Psoas muscle (tissue), 8 donors: ENCODE measurements at regions of chr6 and their contacts with region 1.

Region 1: DNA sequence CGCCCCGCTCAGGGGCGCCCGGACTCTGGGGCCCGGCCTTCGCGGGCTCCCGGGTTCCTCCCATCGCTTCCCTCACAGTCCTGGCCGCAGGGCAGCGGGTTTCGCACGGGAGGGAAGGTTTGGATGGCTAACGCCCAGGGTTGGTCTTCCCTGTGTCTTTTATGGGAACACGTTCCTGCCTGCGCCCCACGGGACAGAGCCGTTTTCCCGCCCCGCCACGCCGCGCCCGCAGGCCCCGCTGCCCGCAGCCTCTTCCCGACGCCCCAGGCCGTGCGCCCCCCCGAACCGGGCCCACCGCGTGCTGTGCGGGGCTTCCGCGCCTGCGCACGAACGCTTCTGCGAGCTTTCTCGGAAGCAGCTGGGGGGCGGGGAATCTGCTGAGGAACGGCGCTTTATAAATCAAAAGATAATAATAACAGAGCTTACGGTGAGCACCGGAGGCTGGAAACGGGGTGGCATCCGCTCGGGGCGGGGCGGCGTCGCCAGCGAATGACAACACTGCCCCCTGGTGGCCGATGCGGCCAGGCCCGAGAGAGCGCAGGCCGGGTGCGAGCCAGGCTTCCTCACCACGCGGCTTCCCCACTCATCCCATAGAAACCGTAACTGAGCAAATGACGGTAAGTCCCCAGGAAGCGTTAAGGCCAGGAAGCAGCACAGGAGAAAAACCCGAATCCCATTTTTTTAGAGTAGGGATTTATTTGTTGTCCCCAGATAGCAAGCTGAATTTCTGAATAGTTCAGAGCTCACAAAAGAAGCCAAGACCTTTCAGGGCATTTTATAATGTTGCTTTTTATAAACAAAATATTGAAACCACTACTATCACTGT is 116.4 kb downstream of the MYLK4 start:
- DNase-seq: peak; percentile 86 to 90
- ATAC-seq: peak; percentile 86 to 92 (median 88)
- H3K4me3 ChIP-seq: peak overlapping the region; percentile 65
- H3K27ac ChIP-seq: peak overlapping the region; percentile 75
- H3K4me1 ChIP-seq: peaks cover 30% of the 10 kb centered on the region
- H3K27me3 ChIP-seq: no peaks in the 10 kb centered on the region
- CTCF ChIP-seq: peak; percentile 99

Region 2: DNA sequence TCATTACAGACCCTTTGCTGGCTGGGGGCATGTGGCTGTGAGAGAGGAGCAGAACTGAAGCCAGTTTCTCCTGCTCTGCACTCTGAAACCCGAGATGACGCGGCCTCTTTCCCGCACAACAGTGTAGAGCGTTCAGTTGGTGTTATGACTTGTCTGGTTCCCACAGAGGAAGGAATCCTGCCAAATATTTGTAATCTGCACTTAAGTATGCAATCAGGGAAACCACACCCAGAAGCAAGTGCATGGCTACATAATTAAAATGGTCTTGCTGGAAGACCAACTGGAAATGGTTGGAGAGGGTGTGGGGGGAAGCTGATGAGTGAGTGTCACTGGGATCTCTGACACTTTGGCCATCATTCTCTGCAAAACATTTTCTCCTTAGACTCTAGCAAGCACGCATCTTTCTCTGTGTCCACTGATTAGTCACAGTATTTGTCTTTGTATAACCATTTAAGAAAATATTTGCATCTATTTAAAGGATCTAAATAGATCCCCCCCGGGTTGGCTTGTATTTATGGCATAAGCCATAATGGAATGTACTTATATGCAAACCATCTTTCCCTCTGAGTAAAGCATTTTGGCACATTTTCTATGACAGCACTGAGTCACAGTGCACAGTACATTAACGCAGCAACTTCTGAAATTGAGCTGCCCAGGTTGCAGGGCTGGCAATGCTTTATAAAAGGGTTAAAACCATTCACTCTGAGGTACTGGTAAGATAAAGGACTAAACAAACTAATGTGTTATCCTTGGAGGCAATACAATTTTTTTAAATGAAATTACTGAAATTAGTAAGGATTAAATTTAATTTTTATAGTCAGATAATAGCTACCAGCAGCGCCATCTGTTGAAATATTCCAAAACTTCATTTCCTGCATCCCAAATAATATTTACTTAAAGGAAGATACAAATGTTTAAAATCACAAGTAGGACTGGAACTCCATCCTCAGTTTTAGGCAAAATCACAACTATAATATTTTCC is 947.9 kb before region 1 on chr6:
- intact Hi-C with region 1: loop called in 1 of 2 experiments (anchors 10 kb)
- DNase-seq: peak in 1 of 2 donors; percentile 23
- ATAC-seq: peak; percentile 66 to 90 (median 79)
- H3K4me3 ChIP-seq: no peak overlapping the region
- H3K27ac ChIP-seq: peak overlapping the region; percentile 47
- H3K4me1 ChIP-seq: peaks cover 9% of the 10 kb centered on the region
- H3K27me3 ChIP-seq: no peaks in the 10 kb centered on the region
- CTCF ChIP-seq: peak; percentile 24

Region 3: DNA sequence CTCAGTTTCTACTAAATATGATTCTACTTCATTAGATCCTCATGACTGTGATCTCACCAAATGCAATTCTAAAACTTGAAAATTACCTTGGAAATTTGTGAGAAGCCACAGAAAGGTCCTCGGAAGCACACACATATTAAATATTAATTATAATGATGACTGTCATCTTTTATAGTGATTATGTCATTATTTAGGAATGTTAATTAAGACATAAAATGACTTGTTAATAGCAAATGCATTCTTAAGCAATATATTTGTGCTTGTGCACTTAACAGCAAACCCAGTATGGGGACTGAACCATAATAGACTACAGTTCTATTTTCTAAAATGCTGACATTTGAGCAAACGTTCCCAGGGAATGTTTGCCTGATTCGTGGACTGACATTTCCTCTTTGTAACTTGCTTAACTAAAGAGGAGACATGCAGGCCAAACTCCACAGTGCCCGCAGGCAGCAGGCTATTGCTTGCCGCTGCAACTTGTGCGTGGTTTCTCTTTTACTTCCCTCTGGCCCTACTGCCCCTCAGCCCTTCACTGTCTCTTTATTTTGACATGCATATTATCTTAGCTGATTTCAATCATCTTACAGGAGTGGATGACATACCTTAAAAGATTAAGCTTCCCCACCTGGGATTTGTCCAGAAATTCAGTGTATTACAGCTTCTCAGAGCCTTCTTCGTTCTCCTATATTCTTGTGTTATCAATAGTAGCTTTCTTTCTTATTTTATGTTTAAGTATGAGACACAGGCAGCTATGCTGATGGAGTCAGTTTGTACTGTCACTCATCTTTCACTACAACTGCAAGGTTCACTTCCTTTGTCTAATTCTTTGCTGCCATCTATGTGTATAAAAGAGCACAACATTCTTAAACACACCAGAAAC is 530.5 kb before region 1 on chr6:
- intact Hi-C with region 1: loop called in 1 of 2 experiments (anchors 10 kb)
- DNase-seq: no peak
- ATAC-seq: peak in 1 of 4 donors; percentile 65
- H3K4me3 ChIP-seq: peak overlapping the region; percentile 31
- H3K27ac ChIP-seq: no peak overlapping the region
- H3K4me1 ChIP-seq: peaks cover 7% of the 10 kb centered on the region
- H3K27me3 ChIP-seq: no peaks in the 10 kb centered on the region
- CTCF ChIP-seq: peak; percentile 55

Region 4: GRCh38 chr6:2196079-2196679 is 438.2 kb before region 1 on chr6:
- intact Hi-C with region 1: loop called in 1 of 2 experiments (anchors 10 kb)
- DNase-seq: no peak
- ATAC-seq: peak; percentile 56 to 88 (median 64)
- H3K4me3 ChIP-seq: no peak overlapping the region
- H3K27ac ChIP-seq: no peak overlapping the region
- H3K4me1 ChIP-seq: no peaks in the 10 kb centered on the region
- H3K27me3 ChIP-seq: peaks cover 0 to 3% (median 0%) of the 10 kb centered on the region in 3 donors
- CTCF ChIP-seq: peak; percentile 85

Region 5: DNA sequence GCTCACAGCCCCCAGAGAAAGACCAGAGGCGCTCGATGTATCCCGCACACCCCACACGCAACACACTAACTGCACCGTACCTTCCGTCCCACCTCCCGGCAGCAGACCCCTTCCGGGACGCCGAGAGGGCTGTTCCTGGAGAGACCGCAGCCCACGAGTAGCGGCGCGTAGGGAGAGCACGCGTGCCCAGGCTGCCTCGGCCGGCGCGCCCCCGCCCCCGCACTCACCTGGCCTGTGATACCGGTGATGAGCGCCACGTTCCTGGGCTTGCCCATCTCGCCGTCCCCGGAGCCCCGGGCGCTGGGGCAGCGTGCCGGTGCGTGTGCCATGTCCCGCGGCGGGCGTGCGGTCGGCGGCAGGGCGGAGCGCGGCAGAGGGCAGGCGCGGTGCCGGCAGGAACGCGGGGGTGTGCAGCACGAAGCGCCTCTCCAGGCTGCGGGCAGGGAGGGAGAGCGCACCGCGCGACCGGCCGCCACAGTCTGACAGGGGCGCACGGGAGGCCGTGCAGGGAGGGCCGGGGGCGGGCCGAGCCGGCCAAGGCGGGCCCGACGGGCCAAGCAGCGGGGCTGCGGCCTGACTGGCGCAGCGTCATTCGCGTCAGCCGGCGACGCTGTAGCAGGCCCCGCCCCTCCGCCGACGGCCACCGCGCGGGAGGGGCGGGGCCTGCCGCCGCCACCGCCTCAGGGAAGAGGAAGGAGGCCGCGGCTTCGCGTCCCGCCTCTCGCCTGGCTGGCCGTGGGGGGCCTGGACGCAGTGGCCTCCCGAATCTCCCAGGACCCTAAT is 389.1 kb before region 1 on chr6 and contains the start of gene GMDS:
- intact Hi-C with region 1: loop called (anchors 5 to 10 kb)
- DNase-seq: peak; percentile 88 to 93
- ATAC-seq: peak; percentile 99
- H3K4me3 ChIP-seq: peak within 1 kb of the TSS; percentile 97
- H3K27ac ChIP-seq: peak within 1 kb of the TSS; percentile 90
- H3K4me1 ChIP-seq: peaks cover 8% of the 10 kb centered on the region
- H3K27me3 ChIP-seq: no peaks in the 10 kb centered on the region
- CTCF ChIP-seq: no peak
- total RNA-seq, gene GMDS: 3.9 to 6.6 (median 4.7) TPM

Region 6: DNA sequence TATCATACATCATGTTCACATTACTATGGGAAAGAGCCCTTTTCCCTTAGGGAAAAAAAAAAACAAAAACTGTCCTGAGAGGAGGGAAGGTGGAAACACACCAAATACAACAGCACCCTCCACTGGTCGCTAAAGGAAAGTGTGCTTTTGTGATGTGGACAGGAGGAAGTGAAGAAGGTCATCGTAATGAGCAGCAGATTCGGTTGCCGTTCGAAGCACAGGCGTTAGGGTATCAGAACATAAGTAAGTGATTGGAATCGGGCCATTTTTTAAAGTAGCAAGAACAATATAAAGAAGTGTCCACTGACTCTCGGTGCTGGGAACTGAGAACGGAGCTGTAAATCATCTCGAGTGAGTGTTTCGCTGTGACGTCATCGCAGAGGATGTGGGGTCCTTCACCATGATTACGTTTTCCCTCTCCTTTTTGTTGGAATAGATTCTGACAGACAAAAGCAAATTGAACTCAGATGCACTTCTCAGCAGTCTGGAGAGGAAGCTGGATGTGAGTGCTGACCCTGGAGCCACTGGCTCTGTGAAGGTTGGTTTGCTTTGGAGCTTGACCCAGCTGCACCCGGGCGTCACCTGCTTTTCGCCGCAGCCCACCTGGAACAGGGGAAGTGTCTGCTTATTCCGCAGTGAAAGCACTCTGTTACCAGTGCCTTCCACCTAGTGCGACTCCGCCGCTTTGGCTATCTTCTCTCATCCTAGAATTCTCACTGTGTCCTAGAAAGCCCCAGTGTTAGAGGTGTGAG is 185.4 kb before region 1 on chr6:
- intact Hi-C with region 1: loop called in 1 of 2 experiments (anchors 5 kb)
- DNase-seq: no peak
- ATAC-seq: peak in 3 of 4 donors; percentile 49 to 78 (median 54)
- H3K4me3 ChIP-seq: no peak overlapping the region
- H3K27ac ChIP-seq: no peak overlapping the region
- H3K4me1 ChIP-seq: peaks cover 6% of the 10 kb centered on the region
- H3K27me3 ChIP-seq: no peaks in the 10 kb centered on the region
- CTCF ChIP-seq: peak; percentile 58

Region 7: DNA sequence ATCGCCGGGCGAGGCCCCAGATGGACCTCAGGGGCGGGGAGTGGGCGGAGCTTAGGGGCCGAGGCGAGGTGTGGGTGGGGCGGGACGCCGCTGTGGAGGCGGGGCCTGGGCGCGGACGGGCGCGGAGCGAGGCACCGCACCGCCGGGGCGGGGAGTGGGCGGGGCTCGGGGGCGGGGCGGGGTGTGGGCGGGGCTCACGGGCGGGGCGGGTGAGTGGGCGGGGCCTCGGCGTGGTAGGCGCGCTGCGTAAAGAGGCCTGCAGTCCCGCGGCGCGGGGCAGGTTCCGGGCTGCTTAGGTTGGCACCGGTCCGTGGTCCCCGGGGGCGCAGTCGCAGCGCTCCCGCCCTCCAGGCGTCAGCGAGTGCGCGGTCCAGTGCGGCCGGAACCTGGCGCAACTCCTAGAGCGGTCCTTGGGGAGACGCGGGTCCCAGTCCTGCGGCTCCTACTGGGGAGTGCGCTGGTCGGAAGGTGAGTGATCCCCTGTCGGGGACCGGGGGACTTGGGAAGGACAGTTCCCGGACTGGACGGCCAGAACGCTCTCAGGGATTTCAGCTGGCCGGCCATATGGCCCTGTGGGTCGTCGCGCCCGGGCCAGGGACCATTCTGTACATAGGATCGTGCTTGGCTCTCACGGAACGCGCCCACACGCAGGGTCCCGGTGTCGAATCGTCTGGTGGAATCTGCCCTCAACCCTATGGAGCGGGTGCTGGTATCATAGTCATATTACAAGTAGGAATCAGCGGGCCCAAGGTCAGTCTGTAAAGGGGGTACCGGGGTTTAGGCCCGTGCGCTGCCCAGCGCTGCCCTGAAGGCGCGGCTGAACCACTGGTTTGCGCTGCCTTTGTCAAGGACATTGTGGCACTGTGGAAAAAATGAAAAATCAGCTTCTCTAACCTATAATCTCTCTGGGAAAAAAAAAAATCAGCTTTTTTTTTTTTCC is 365.5 kb after region 1 on chr6 and contains the start of gene NQO2:
- intact Hi-C with region 1: no loop called
- DNase-seq: peak; percentile 93 to 96
- ATAC-seq: peak; percentile 84 to 87 (median 84)
- H3K4me3 ChIP-seq: peak within 1 kb of the TSS; percentile 95
- H3K27ac ChIP-seq: peak within 1 kb of the TSS; percentile 99
- H3K4me1 ChIP-seq: peaks cover 20% of the 10 kb centered on the region
- H3K27me3 ChIP-seq: no peaks in the 10 kb centered on the region
- CTCF ChIP-seq: no peak
- total RNA-seq, gene NQO2: 42.8 to 129 (median 101) TPM